GM10248 (cell line): ENCODE measurements at regions of chr3 and their contacts with region 1.

Region 1: GRCh38 chr3:129663026-129663446 is 56.6 kb upstream of the PLXND1 start:
- DNase-seq: no peak
- CTCF ChIP-seq: no peak

Region 2: GRCh38 chr3:129439817-129440617 is 223.0 kb before region 1 on chr3 and contains the starts of genes IFT122 and MBD4:
- CTCF ChIA-PET with region 1: no interaction called
- POLR2A ChIA-PET with region 1: no interaction called
- DNase-seq: peak; percentile 98
- CTCF ChIP-seq: no peak

Region 3: GRCh38 chr3:129650256-129650872 is 12.7 kb before region 1 on chr3:
- CTCF ChIA-PET with region 1: interaction called, 12 read pairs
- POLR2A ChIA-PET with region 1: no interaction called
- DNase-seq: peak; percentile 60
- CTCF ChIP-seq: peak; percentile 66

Region 4: DNA sequence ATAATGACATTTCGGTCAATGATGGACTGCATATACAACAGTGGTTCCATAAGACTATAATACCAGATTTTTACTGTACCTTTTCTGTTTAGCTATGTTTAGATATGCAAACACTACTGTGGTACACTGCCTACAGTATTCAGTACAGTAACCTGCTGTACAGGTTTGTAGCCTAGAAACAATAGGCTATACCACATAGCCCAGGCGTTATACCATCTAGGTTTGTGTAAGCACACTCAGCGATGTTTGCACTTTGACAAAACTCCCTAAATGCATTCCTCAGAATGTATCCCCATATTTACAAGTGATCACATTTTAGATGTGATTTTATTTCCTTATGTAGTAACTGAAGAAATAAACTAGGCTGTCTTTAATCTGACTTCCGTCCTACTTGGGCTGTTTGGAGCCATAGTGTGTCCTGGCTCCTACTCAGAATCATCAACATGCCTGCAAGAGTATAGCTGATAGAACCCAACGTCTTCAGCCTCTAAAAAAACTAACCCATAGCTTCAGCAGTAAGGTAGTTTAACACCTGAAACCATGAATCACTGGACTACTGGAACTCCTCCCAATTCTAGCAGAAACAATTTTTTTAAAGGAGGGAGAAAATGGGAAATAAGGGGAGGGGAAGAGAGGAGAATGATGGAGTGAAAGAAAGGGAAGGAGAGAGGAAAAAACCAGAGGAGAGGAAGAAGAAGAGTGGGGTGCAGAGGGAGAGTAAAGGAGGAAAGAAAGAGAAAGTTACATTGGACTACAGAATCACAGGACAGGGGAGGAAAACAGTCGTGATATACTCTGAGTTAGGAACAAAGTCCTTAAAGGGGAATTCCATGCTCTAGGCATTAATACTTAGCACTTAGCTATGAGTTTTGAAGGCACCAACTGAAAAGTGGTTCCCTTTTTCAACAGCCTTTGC is 11.1 kb after region 1 on chr3:
- CTCF ChIA-PET with region 1: interaction called, 12 read pairs
- POLR2A ChIA-PET with region 1: no interaction called
- DNase-seq: peak; percentile 27
- CTCF ChIP-seq: no peak

Region 5: GRCh38 chr3:129684054-129684669 is 21.1 kb after region 1 on chr3:
- CTCF ChIA-PET with region 1: no interaction called
- POLR2A ChIA-PET with region 1: no interaction called
- DNase-seq: no peak
- CTCF ChIP-seq: no peak

Region 6: DNA sequence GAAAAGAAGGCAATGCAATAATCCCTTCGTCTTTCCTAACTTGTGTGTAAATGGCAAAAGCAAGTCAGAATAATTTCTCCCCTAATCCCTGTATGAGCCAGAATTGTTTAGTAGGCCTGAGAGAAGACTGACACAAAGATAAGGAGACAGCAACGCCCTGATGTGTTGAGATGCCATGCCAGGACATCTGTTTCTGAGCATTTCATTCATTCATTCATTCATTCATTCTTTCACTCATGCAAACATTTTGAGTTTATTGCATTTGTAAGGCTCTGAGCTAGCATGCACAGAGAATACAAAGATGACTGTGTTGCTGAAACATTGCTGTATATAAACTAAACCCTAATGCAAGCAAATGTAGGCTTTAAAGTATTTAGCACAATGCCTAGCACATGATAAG is 103.1 kb after region 1 on chr3:
- CTCF ChIA-PET with region 1: no interaction called
- POLR2A ChIA-PET with region 1: no interaction called
- DNase-seq: no peak
- CTCF ChIP-seq: no peak

Region 7: DNA sequence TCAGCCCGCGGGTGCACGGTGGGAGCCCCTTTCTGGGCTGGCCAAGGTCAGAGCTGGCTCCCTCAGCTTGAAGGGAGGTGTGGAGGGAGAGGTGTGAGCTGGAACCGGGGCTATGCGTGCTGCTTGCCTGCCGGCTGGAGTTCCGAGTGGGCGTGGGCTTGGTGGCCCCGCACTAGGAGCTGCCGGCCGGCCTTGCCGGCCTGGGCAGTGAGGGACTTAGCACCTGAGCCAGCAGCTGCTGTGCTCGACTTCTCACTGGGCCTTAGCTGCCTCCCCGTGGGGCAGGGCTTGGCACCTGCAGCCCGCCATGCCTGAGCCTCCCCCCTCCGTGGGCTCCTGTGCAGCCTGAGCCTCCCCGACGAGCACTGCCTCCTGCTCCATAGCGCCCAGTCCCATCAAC is 347.5 kb after region 1 on chr3:
- CTCF ChIA-PET with region 1: no interaction called
- POLR2A ChIA-PET with region 1: no interaction called
- DNase-seq: no peak
- CTCF ChIP-seq: no peak